CD4-positive, alpha-beta memory T cell (primary cell): ENCODE measurements at regions of chr1 and their contacts with region 1.

Region 1: DNA sequence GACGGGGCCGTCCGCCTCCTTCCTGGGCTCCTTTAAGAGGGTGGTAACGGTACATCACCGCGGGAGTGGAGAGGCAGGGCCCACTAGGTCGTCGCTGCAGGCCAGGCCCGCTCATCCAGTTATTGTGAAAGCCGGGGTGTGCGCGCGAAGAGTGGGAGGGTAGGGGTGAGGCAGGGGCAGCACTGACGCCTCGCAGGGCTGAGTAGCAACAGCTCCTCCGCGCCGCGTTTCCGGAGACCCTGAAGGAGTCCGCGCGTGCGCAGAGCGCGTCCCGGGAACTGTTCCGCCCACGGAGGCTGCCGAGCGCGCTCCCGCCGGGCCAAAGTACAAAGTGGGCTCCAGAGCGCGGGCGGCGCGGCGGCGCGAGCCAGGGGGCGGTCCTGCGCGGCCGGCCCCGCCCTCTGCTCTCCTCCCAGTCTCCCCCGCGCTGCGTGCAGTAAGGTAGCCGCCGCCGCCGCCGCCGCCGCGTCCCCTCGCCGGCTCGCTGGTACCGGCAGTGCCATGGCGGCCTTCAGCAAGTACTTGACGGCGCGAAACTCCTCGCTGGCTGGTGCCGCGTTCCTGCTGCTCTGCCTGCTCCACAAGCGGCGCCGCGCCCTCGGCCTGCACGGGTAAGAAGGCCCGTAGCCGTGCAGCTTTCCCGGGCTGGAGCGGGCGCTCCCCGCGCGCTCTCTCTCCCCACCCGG is at the start of gene ABCD3:
- DNase-seq: peak; percentile 96 to 99 (median 98)
- H3K4me3 ChIP-seq: peak within 1 kb of the TSS; percentile 59 to 88
- H3K4me3 Mint-ChIP-seq: peak within 1 kb of the TSS in 2 of 8 donors; percentile 90 to 91
- H3K27ac ChIP-seq: peak within 1 kb of the TSS; percentile 70
- H3K27ac Mint-ChIP-seq: peak within 1 kb of the TSS in 6 of 7 donors; percentile 37 to 92 (median 88)
- H3K4me1 ChIP-seq: peaks cover 46% of the 10 kb centered on the region
- H3K4me1 Mint-ChIP-seq: peaks cover 23 to 40% (median 28%) of the 10 kb centered on the region in 4 donors
- H3K27me3 ChIP-seq: no peaks in the 10 kb centered on the region
- H3K27me3 Mint-ChIP-seq: peaks cover 0 to 4% of the 10 kb centered on the region in 2 donors
- total RNA-seq, gene ABCD3: 23.6 to 23.8 TPM

Region 2: DNA sequence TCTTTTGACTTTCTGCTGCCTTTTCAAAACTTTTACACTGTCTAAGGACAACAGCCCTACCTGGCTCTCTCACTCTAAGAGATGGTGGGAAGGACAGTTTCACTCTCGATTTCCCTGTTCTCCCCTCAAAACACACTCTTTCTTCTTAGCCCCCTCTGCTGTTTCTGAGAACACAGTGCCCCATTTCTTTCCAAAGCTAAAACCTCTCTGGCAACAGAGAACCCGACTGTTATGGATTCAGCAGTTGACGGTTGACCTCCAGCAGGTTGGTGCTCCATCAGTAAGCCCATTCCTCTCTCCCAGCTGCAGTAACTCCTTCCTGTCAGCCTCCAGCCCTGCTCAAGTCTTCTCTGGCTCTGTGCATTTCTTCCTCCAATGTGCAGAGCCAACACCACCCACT is 88.1 kb before region 1 on chr1:
- CTCF ChIA-PET with region 1: no interaction called
- POLR2A ChIA-PET with region 1: no interaction called
- intact Hi-C with region 1: no loop called
- DNase-seq: no peak
- H3K4me3 ChIP-seq: no peak overlapping the region
- H3K4me3 Mint-ChIP-seq: no peak overlapping the region
- H3K27ac ChIP-seq: no peak overlapping the region
- H3K27ac Mint-ChIP-seq: no peak overlapping the region
- H3K4me1 ChIP-seq: no peaks in the 10 kb centered on the region
- H3K4me1 Mint-ChIP-seq: peaks cover 0 to 2% (median 0%) of the 10 kb centered on the region in 4 donors
- H3K27me3 ChIP-seq: peaks cover 3% of the 10 kb centered on the region
- H3K27me3 Mint-ChIP-seq: peaks cover 28 to 38% of the 10 kb centered on the region in 2 donors

Region 3: DNA sequence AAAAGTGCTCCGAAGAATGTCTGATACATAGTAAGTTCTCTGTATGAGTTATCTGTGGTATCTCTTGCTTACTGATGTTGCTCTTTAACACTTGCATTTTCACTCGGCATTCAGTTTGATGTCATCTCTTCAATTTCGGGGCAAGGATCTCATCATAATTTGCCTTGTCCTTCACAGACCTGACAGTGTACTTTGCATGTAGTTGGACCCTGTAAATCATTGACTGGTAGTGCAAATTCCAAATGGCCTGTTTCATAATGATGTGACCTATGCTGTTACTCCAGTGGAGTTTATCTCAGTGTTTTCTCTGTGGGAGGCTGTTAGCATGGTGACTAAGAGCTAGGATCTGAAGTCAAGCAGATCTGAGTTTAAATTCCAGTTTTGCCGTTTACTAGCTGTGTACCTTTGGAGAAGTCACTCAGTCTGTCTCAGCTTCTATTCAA is 34.1 kb before region 1 on chr1:
- CTCF ChIA-PET with region 1: no interaction called
- POLR2A ChIA-PET with region 1: interaction called, 4 read pairs
- intact Hi-C with region 1: loop called (anchors 1 kb)
- DNase-seq: no peak
- H3K4me3 ChIP-seq: no peak overlapping the region
- H3K4me3 Mint-ChIP-seq: peak overlapping the region in 5 of 8 donors; percentile 6 to 83 (median 47)
- H3K27ac ChIP-seq: no peak overlapping the region
- H3K27ac Mint-ChIP-seq: peak overlapping the region in 2 of 7 donors; percentile 12 to 47
- H3K4me1 ChIP-seq: peaks cover 17% of the 10 kb centered on the region
- H3K4me1 Mint-ChIP-seq: peaks cover 16 to 24% (median 19%) of the 10 kb centered on the region in 4 donors
- H3K27me3 ChIP-seq: no peaks in the 10 kb centered on the region
- H3K27me3 Mint-ChIP-seq: peaks cover 2% of the 10 kb centered on the region in 2 donors

Region 4: DNA sequence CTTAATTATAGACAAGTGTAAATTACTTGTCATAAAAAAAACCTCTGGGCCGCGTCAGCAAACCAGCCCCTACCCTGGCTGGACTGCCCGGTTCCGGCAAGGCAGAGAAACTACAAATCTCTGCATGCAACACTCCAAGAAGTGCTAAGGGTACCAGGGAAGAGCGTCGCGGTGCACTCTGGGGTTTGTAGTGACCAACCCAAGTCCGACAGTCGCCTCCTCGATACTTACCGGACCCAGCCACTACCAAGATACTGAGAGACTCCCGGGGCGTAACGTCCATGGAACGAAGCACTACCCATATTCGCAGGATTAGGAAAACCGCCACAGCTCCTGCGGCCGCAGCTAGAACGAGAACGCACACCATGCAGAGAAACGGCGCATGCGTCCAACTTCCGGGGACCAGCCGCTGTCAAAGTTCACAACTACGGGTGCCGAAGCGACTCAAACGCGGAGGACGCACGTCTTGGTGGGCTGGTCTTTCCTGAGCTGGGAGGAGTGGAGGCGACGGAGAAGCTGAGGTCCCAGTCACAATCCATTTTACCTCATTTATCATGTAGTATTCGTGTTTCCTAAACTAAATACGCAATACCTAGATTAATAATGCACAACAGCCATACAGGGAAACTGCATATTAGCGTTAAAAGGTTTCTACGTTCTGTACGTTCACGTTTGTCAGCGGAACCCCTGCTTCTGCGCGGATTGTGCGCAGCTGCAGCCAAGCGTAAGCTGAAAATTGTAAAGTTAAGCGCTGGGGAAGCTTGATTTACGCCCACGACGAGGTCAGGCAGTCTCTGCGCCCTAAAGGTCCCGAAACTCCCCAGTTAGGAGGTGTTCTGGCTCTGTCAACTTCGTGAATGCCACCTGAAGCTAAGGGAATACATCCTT is 654.7 kb after region 1 on chr1 and contains the start of gene ALG14:
- CTCF ChIA-PET with region 1: no interaction called
- POLR2A ChIA-PET with region 1: interaction called, 3 read pairs
- intact Hi-C with region 1: loop called (anchors 1 kb)
- DNase-seq: peak; percentile 94 to 96 (median 95)
- H3K4me3 ChIP-seq: peak within 1 kb of the TSS; percentile 93 to 96
- H3K4me3 Mint-ChIP-seq: peak within 1 kb of the TSS; percentile 96 to 99 (median 98)
- H3K27ac ChIP-seq: peak within 1 kb of the TSS; percentile 83
- H3K27ac Mint-ChIP-seq: peak within 1 kb of the TSS; percentile 96 to 99 (median 98)
- H3K4me1 ChIP-seq: peaks cover 14% of the 10 kb centered on the region
- H3K4me1 Mint-ChIP-seq: peaks cover 12 to 21% (median 18%) of the 10 kb centered on the region in 4 donors
- H3K27me3 ChIP-seq: no peaks in the 10 kb centered on the region
- H3K27me3 Mint-ChIP-seq: peaks cover 2 to 5% of the 10 kb centered on the region in 2 donors
- total RNA-seq, gene ALG14: 1.1 to 3.2 TPM